H1 (cell line): ENCODE measurements at regions of chr11 and their contacts with region 1.

Region 1: DNA sequence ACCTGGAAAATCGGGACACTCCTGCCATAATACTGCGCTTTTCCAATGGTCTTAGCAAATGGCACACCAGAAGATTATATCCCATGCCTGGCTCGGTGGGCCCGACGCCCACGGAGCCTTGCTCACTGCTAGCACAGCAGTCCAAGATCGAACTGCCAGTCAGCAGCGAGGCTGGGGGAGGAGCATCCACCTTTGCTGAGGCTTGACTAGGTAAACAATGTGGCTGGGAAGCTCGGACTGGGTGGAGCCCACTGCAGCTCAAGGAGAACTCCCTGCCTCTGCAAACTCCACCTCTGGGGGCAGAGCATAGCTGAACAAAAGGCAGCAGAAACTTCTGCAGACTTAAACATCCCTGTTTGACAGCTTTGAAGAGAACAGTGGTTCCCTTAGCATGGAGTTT is 15.6 kb downstream of the PTH start:
- DNase-seq: no peak
- H3K4me3 ChIP-seq: no peak overlapping the region
- H3K27ac ChIP-seq: no peak overlapping the region
- H3K4me1 ChIP-seq: no peaks in the 10 kb centered on the region
- H3K27me3 ChIP-seq: no peaks in the 10 kb centered on the region
- CTCF ChIP-seq: no peak
- EP300 ChIP-seq: no peak
- POLR2A ChIP-seq: no peak
- RAD21 ChIP-seq: no peak

Region 2: GRCh38 chr11:13465909-13466371 is 14.3 kb before region 1 on chr11:
- CTCF ChIA-PET with region 1: interaction called, 41 read pairs
- POLR2A ChIA-PET with region 1: no interaction called
- DNase-seq: no peak
- H3K4me3 ChIP-seq: no peak overlapping the region
- H3K27ac ChIP-seq: no peak overlapping the region
- H3K4me1 ChIP-seq: no peaks in the 10 kb centered on the region; a peak in 1 of 7 replicates
- H3K27me3 ChIP-seq: no peaks in the 10 kb centered on the region
- CTCF ChIP-seq: peak in 2 of 3 experiments; percentile 12 to 22; a peak in 2 of 4 replicates
- EP300 ChIP-seq: no peak
- POLR2A ChIP-seq: no peak
- RAD21 ChIP-seq: peak; percentile 20; a peak in 3 of 4 replicates